Natural killer cell (primary cell): ENCODE measurements at regions of chr3 and their contacts with region 1.

Region 1: GRCh38 chr3:136042608-136043221 is 77.2 kb downstream of the PPP2R3A start:
- DNase-seq: peak in 1 of 2 donors; percentile 36
- ATAC-seq: no peak
- H3K4me3 ChIP-seq: no peak overlapping the region
- H3K4me3 Mint-ChIP-seq: no peak overlapping the region
- H3K27ac ChIP-seq: no peak overlapping the region
- H3K27ac Mint-ChIP-seq: no peak overlapping the region
- H3K4me1 ChIP-seq: no peaks in the 10 kb centered on the region
- H3K4me1 Mint-ChIP-seq: no peaks in the 10 kb centered on the region
- H3K27me3 ChIP-seq: no peaks in the 10 kb centered on the region
- H3K27me3 Mint-ChIP-seq: peaks cover 7 to 9% of the 10 kb centered on the region in 2 donors
- CTCF ChIP-seq: peak; percentile 32

Region 2: DNA sequence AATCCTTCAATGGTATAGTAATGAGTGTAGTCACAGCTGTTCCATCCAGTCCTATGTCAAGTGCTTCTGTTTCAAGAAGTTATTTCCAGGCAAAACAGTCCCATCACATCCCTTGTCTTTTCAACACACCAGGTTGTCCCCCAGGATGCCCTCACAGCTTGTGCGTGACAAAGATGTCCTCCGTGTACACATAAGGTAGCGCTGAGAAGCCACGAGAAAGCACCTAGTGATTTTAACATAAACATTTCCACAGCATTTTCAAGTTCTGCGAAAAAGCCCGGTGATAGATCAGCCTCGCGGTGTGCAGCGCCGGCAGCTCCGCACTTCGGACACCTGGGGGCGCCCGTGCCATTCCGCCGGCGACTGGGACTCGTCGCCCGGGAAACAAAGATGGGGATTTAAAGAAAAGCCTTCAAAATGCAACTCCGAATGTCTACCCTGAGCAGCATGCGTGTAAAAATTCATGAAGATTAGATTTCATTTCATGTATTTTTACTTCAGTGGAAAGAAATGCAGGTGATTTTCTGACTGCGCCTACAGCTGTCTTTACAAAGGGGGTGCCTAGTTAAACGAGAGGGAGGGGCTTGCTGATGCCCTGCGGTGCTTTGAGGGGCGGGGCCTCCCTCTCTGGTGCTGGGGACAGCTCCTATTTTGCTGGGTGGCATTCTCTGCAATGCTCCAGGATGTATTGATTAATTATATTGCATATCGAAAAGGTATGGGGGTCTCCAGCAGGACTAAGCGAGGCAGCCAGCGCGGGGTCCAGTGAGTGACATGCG is 1441.8 kb before region 1 on chr3:
- intact Hi-C with region 1: loop called (anchors 5 kb)
- DNase-seq: peak; percentile 42 to 59
- ATAC-seq: peak; percentile 75 to 90 (median 76)
- H3K4me3 ChIP-seq: no peak overlapping the region
- H3K4me3 Mint-ChIP-seq: no peak overlapping the region
- H3K27ac ChIP-seq: no peak overlapping the region
- H3K27ac Mint-ChIP-seq: no peak overlapping the region
- H3K4me1 ChIP-seq: peaks cover 7% of the 10 kb centered on the region
- H3K4me1 Mint-ChIP-seq: peaks cover 0 to 10% of the 10 kb centered on the region in 2 donors
- H3K27me3 ChIP-seq: no peaks in the 10 kb centered on the region
- H3K27me3 Mint-ChIP-seq: peaks cover 0 to 3% of the 10 kb centered on the region in 2 donors
- CTCF ChIP-seq: peak; percentile 87

Region 3: DNA sequence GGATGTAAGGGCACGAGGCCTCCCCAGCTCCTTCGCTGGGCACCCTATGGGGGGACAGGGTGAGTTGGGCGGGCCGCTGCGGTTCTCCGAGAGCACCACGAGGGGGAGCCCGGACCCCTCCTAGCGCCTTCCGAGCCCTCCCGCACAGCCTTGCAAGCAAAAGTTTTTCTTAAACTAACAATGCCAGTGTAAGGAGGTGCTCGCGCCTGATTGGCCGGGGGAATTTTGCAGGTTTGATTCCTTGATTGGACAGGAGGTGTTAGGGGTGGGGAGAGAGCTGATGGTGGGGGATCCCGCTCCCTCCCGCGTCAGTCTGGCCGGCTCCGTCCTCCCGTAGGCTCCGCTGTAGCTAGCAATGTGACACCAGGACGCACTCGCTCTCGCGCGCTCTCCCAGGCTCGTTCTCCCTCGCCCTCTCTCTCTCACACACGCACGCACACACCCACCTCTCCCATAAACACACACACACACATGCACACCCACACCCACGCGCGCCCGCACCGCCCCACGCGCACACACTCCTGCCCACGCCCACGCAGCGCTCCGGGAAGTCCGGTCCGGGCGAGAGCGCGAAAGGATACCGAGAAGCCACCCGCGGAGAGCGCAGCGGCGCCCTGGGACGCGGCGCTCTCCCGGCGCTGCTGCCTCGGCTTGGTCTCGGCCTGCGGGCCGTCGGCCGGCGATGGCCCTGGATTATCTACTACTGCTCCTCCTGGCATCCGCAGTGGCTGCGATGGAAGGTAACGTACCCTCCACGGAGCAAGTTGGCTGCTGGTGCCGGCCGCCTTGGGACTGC is 1247.6 kb before region 1 on chr3 and contains the start of gene EPHB1:
- intact Hi-C with region 1: loop called (anchors 5 kb)
- DNase-seq: peak in 1 of 2 donors; percentile 51
- ATAC-seq: peak; percentile 26 to 84 (median 42)
- H3K4me3 ChIP-seq: peak within 1 kb of the TSS; percentile 28
- H3K4me3 Mint-ChIP-seq: peak within 1 kb of the TSS; percentile 85
- H3K27ac ChIP-seq: no peak within 1 kb of the TSS
- H3K27ac Mint-ChIP-seq: no peak within 1 kb of the TSS
- H3K4me1 ChIP-seq: peaks cover 5% of the 10 kb centered on the region
- H3K4me1 Mint-ChIP-seq: peaks cover 11% of the 10 kb centered on the region in 2 donors
- H3K27me3 ChIP-seq: peaks cover 6% of the 10 kb centered on the region
- H3K27me3 Mint-ChIP-seq: peaks cover 33 to 35% of the 10 kb centered on the region in 2 donors
- CTCF ChIP-seq: peak; percentile 26
- total RNA-seq, gene EPHB1: 0.60 TPM in 1 of 3 donors, not detected in the others

Region 4: GRCh38 chr3:135078283-135078682 is 964.4 kb before region 1 on chr3:
- intact Hi-C with region 1: no loop called
- DNase-seq: no peak
- ATAC-seq: no peak
- H3K4me3 ChIP-seq: no peak overlapping the region
- H3K4me3 Mint-ChIP-seq: no peak overlapping the region
- H3K27ac ChIP-seq: no peak overlapping the region
- H3K27ac Mint-ChIP-seq: no peak overlapping the region
- H3K4me1 ChIP-seq: no peaks in the 10 kb centered on the region
- H3K4me1 Mint-ChIP-seq: no peaks in the 10 kb centered on the region
- H3K27me3 ChIP-seq: no peaks in the 10 kb centered on the region
- H3K27me3 Mint-ChIP-seq: no peaks in the 10 kb centered on the region
- CTCF ChIP-seq: no peak